ENCODE measurements at regions of chr22 and their contacts with region 1.

Region 1: GRCh38 chr22:21020802-21021429 is 6.0 kb downstream of the P2RX6 start:
- DNase-seq: no peak
- H3K4me3 ChIP-seq: no peak overlapping the region
- H3K27me3 ChIP-seq: no peaks in the 10 kb centered on the region; the same call in 1 of the 2 replicates
- CTCF ChIP-seq: peak; percentile 53

Region 2: DNA sequence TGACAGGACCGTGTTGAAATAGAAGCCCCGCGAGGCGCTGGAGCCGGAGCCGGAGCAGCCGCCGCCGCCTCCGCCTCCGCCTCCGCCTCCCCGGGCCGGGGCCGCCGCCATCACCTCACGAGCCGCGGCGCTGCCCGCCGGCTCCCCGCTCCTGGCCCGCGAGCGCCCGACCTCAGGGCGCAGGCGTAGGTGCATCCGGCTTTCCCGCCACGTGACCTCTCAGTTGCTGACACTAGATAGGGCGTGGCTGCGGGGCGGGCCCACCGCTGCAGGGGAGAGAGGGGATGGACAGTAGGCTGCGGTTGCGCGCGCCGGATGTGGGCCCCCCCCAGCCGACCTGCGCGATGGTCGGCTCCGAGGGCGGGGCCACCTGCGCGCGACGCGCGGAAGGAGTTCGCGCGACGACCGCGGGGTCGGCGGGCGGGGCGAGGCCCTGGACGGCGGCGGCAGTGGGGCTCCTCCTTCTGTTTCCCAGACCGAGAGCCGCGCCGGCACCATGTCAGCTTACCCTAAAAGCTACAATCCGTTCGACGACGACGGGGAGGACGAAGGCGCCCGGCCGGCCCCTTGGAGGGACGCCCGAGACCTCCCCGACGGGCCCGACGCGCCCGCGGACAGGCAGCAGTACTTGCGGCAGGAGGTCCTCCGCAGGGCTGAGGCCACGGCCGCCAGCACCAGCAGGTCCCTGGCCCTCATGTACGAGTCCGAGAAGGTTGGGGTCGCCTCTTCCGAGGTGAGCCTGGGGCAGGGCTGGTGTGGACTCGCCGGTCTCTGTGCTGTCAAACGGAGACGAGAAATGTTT is 162.1 kb before region 1 on chr22 and contains the starts of genes PI4KA and SNAP29:
- CTCF ChIA-PET with region 1: no interaction called
- POLR2A ChIA-PET with region 1: no interaction called
- DNase-seq: peak; percentile 74
- H3K4me3 ChIP-seq: peak within 1 kb of the TSS; percentile 87
- H3K27me3 ChIP-seq: no peaks in the 10 kb centered on the region
- CTCF ChIP-seq: no peak
- polyA plus RNA-seq, gene PI4KA: 23.7 and 34.2 TPM in 2 replicates
- polyA plus RNA-seq, gene SNAP29: 34.6 and 41.9 TPM in 2 replicates

Region 3: GRCh38 chr22:21031971-21032867 is 11.3 kb after region 1 on chr22 and contains the start of gene SLC7A4:
- CTCF ChIA-PET with region 1: interaction called, 14 read pairs
- POLR2A ChIA-PET with region 1: no interaction called
- DNase-seq: no peak
- H3K4me3 ChIP-seq: peak within 1 kb of the TSS; percentile 7; the same call in 1 of the 2 replicates
- H3K27me3 ChIP-seq: peaks cover 4% of the 10 kb centered on the region; the same call in 1 of the 2 replicates
- CTCF ChIP-seq: no peak
- polyA plus RNA-seq, gene SLC7A4: 0.27 and 0.29 TPM in 2 replicates